ENCODE measurements at regions of chr1 and their contacts with region 1.

Region 1: GRCh38 chr1:29793101-29793546 is 556.8 kb downstream of the PTPRU start:
- DNase-seq: peak; percentile 73 to 76
- H3K4me3 ChIP-seq: no peak overlapping the region
- H3K4me3 Mint-ChIP-seq: peak overlapping the region; percentile 28
- H3K27ac Mint-ChIP-seq: no peak overlapping the region
- H3K4me1 ChIP-seq: no peaks in the 10 kb centered on the region
- H3K4me1 Mint-ChIP-seq: no peaks in the 10 kb centered on the region
- H3K27me3 ChIP-seq: no peaks in the 10 kb centered on the region
- H3K27me3 Mint-ChIP-seq: peaks cover 5% of the 10 kb centered on the region
- CTCF ChIP-seq: peak; percentile 43 to 68

Region 2: GRCh38 chr1:29767088-29767685 is 25.9 kb before region 1 on chr1:
- CTCF ChIA-PET with region 1: no interaction called
- POLR2A ChIA-PET with region 1: no interaction called
- intact Hi-C with region 1: no loop called
- DNase-seq: no peak
- H3K4me3 ChIP-seq: no peak overlapping the region
- H3K4me3 Mint-ChIP-seq: no peak overlapping the region
- H3K27ac Mint-ChIP-seq: no peak overlapping the region
- H3K4me1 ChIP-seq: no peaks in the 10 kb centered on the region
- H3K4me1 Mint-ChIP-seq: no peaks in the 10 kb centered on the region
- H3K27me3 ChIP-seq: no peaks in the 10 kb centered on the region
- H3K27me3 Mint-ChIP-seq: no peaks in the 10 kb centered on the region
- CTCF ChIP-seq: no peak

Region 3: DNA sequence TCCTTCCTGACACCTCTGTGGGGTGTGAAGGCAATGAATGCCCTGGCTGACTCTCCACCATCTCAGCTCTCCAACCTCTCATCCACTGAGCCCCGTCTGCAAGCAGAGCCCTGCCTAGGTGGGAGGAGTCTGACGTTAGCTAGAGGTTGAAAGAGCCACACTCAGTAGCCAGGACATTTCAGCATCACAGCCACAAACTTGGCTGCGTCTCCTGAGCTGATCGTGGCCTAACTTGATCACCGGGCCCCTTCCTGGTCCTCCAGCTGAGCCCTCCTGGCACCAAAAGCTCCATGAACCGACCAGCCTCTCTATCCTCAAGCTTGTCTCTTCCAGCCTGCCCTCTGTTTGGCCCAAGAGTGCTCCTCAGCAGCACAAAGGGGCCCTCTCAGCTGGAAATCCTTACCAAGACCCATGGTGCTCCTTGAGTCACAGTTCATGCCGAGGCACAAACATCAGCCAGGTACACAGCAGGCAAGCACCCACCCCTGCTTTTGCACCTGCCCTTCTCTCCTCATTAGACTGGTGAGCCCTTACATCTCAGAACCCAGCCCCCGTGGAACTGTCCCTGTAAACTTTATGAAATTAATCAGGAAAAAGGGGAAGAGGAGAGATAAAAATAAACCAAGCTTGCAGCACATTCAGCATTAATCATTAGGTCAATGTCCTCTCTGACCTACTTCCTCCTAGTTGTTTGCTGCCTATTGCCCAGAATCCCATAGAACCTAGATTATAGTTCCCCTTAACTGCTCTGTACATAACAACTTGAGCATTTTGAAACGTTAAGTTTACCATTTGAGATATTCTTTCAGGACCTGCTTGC is 191.6 kb after region 1 on chr1:
- CTCF ChIA-PET with region 1: no interaction called
- POLR2A ChIA-PET with region 1: no interaction called
- intact Hi-C with region 1: no loop called
- DNase-seq: no peak
- H3K4me3 ChIP-seq: no peak overlapping the region
- H3K4me3 Mint-ChIP-seq: no peak overlapping the region
- H3K27ac Mint-ChIP-seq: no peak overlapping the region
- H3K4me1 ChIP-seq: no peaks in the 10 kb centered on the region
- H3K4me1 Mint-ChIP-seq: no peaks in the 10 kb centered on the region
- H3K27me3 ChIP-seq: no peaks in the 10 kb centered on the region
- H3K27me3 Mint-ChIP-seq: no peaks in the 10 kb centered on the region
- CTCF ChIP-seq: no peak

Region 4: GRCh38 chr1:30106125-30106524 is 313.0 kb after region 1 on chr1:
- CTCF ChIA-PET with region 1: interaction called, 6 read pairs
- POLR2A ChIA-PET with region 1: no interaction called
- intact Hi-C with region 1: loop called (anchors 10 kb)
- DNase-seq: peak; percentile 47 to 51
- H3K4me3 ChIP-seq: no peak overlapping the region
- H3K4me3 Mint-ChIP-seq: no peak overlapping the region
- H3K27ac Mint-ChIP-seq: no peak overlapping the region
- H3K4me1 ChIP-seq: no peaks in the 10 kb centered on the region
- H3K4me1 Mint-ChIP-seq: no peaks in the 10 kb centered on the region
- H3K27me3 ChIP-seq: no peaks in the 10 kb centered on the region
- H3K27me3 Mint-ChIP-seq: peaks cover 7% of the 10 kb centered on the region
- CTCF ChIP-seq: peak; percentile 33 to 60